Activated B cell treated with CpG ODN at 0.5 μM for 24 hours (primary cell): ENCODE measurements at regions of chr1 and their contacts with region 1.

Region 1: GRCh38 chr1:176111835-176112234 is 95.3 kb downstream of the COP1 start:
- DNase-seq: no peak
- ATAC-seq: no peak
- H3K4me3 Mint-ChIP-seq: no peak overlapping the region
- H3K27ac Mint-ChIP-seq: no peak overlapping the region
- H3K4me1 Mint-ChIP-seq: no peaks in the 10 kb centered on the region
- H3K27me3 Mint-ChIP-seq: no peaks in the 10 kb centered on the region
- CTCF ChIP-seq: no peak

Region 2: GRCh38 chr1:176157995-176158394 is 46.2 kb after region 1 on chr1:
- CTCF ChIA-PET with region 1: no interaction called
- POLR2A ChIA-PET with region 1: no interaction called
- intact Hi-C with region 1: loop called (anchors 1 kb)
- DNase-seq: no peak
- ATAC-seq: no peak
- H3K4me3 Mint-ChIP-seq: no peak overlapping the region
- H3K27ac Mint-ChIP-seq: no peak overlapping the region
- H3K4me1 Mint-ChIP-seq: peaks cover 7% of the 10 kb centered on the region
- H3K27me3 Mint-ChIP-seq: no peaks in the 10 kb centered on the region
- CTCF ChIP-seq: no peak